Dendritic cell treated with granulocyte-macrophage colony-stimulating factor and Interleukin-4, amounts not matched to agents 40 ng/mL and 50 ng/mL, for 4 days (primary cell): ENCODE measurements at regions of chr18 and their contacts with region 1.

Region 1: GRCh38 chr18:74495581-74496507 is at the start of gene CNDP2:
- H3K4me3 Mint-ChIP-seq: peak within 1 kb of the TSS; percentile 81
- H3K27ac Mint-ChIP-seq: peak within 1 kb of the TSS; percentile 94
- H3K4me1 Mint-ChIP-seq: peaks cover 30% of the 10 kb centered on the region
- H3K27me3 Mint-ChIP-seq: no peaks in the 10 kb centered on the region

Region 2: DNA sequence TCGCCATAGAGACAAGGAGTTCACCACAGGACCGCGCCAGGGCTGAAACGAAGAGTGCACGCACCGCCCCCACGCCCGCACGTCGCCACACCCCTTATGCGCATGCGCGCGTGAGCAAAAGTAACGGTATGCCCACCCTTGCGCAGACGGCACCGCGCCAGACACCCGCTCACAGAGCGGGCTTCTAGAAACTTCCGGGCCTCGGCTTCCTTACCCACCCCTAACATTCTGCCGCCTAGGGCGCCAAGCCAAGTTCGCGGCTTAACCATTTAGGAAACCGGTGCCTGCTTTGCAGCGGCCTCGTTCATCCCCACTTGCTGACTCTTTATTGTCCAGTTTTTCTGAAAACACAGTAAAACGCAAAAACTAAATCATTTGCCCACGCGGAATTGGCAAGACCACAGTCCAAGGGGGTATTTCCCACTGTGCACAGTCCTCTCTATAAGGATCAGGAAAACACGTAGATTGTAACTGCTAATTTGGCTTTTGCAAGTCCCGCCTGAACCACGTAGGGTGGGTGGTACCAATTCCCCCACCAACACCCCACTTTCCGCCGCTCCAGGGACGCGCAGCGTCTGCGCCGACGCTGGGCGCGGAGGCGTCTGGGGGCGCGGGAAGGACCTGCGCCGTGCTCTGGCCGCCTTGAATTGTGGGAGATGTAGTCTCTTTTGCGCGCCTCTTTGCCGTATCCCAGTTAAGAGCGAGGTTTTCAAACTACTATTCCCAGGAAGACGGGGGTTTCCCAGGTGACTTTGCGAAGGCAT is 347.9 kb before region 1 on chr18 and contains the starts of genes FBXO15 and TIMM21:
- intact Hi-C with region 1: loop called (anchors 2 kb)
- H3K4me3 Mint-ChIP-seq: peak within 1 kb of the TSS; percentile 92
- H3K27ac Mint-ChIP-seq: peak within 1 kb of the TSS; percentile 97
- H3K4me1 Mint-ChIP-seq: peaks cover 41% of the 10 kb centered on the region
- H3K27me3 Mint-ChIP-seq: peaks cover 4% of the 10 kb centered on the region

Region 3: DNA sequence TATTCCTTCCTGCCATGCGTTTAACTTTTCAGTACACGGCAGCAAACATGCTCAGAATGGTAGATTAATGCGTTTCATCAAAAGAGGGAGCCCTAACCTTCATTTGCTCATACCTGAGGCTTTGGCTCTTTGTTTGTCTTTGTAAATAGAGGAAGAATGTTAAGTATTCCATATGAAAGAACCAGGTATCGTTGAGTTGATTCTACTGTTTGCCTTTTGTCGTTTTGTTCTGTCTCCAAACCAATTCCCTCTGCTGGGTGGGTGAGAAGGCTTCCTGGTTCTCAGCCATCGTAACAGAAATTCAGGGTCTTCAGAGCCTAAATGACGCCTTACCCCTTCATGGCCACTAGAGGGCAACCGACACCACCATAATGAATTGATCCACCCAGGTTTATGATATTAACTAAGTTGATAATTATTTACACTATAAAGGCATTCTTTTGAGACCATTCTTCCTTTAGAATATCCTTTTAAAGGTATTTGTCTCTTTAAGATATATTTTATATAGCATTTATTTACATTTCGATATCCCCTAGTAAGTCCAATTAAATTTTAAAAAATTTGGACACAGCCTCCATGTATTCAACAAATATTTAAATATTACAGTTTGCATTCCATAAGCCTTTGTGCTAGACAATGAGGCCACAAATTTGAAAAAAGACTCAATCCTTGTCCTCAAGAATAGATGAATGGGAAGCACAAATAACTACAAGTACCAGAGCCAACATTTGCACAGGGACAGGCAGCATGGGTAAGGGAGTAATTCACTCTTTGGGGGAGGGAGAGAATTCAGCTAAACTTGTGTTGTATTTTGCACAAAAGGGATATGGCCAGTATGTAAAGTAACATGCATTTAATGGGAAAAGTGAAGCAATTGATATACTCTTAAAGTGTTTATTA is 299.4 kb before region 1 on chr18:
- intact Hi-C with region 1: loop called (anchors 1 kb)
- H3K4me3 Mint-ChIP-seq: peak overlapping the region; percentile 13
- H3K27ac Mint-ChIP-seq: no peak overlapping the region
- H3K4me1 Mint-ChIP-seq: peaks cover 12% of the 10 kb centered on the region
- H3K27me3 Mint-ChIP-seq: peaks cover 13% of the 10 kb centered on the region

Region 4: GRCh38 chr18:74353169-74353775 is 142.6 kb before region 1 on chr18:
- intact Hi-C with region 1: loop called (anchors 5 kb)
- H3K4me3 Mint-ChIP-seq: no peak overlapping the region
- H3K27ac Mint-ChIP-seq: no peak overlapping the region
- H3K4me1 Mint-ChIP-seq: no peaks in the 10 kb centered on the region
- H3K27me3 Mint-ChIP-seq: no peaks in the 10 kb centered on the region

Region 5: DNA sequence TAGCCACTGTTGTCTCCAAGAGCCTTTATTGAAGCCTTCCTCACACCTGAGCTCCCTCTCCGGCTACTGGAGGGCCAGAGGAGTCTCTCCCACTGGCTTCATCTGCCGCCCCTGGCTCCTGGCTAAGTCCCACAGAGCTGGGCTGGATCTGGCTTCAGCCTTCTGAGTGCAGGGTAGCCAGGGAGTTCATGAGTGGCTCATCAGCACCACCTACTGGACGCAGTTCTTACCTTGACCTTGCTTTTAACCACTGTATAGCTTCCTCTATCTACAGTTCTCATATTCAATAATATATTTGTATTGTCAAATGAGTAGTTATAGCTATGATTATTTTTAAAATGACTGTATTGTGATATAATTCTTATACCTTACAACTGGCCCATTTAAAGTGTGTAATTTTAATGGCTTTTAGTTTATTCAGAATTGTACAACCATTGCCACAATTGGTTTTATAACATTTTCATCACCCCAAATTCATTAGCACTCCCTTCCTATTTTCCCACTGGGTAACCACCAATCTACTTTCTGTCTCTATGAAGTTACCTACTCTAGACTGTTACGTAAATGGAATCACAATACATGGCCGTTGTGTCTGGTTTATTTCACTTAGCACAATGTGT is 56.2 kb after region 1 on chr18:
- intact Hi-C with region 1: loop called (anchors 10 kb)
- H3K4me3 Mint-ChIP-seq: no peak overlapping the region
- H3K27ac Mint-ChIP-seq: no peak overlapping the region
- H3K4me1 Mint-ChIP-seq: no peaks in the 10 kb centered on the region
- H3K27me3 Mint-ChIP-seq: peaks cover 14% of the 10 kb centered on the region

Region 6: GRCh38 chr18:74597662-74598349 is 102.0 kb after region 1 on chr18 and contains the start of gene ZNF407:
- intact Hi-C with region 1: loop called (anchors 2 kb)
- H3K4me3 Mint-ChIP-seq: peak within 1 kb of the TSS; percentile 97
- H3K27ac Mint-ChIP-seq: peak within 1 kb of the TSS; percentile 99
- H3K4me1 Mint-ChIP-seq: peaks cover 45% of the 10 kb centered on the region
- H3K27me3 Mint-ChIP-seq: no peaks in the 10 kb centered on the region

Region 7: GRCh38 chr18:75309564-75309963 is 813.7 kb after region 1 on chr18:
- intact Hi-C with region 1: loop called (anchors 5 kb)
- H3K4me3 Mint-ChIP-seq: no peak overlapping the region
- H3K27ac Mint-ChIP-seq: peak overlapping the region; percentile 12
- H3K4me1 Mint-ChIP-seq: peaks cover 49% of the 10 kb centered on the region
- H3K27me3 Mint-ChIP-seq: peaks cover 29% of the 10 kb centered on the region